Ovary (tissue), 10 donors: ENCODE measurements at regions of chr6 and their contacts with region 1.

Region 1: DNA sequence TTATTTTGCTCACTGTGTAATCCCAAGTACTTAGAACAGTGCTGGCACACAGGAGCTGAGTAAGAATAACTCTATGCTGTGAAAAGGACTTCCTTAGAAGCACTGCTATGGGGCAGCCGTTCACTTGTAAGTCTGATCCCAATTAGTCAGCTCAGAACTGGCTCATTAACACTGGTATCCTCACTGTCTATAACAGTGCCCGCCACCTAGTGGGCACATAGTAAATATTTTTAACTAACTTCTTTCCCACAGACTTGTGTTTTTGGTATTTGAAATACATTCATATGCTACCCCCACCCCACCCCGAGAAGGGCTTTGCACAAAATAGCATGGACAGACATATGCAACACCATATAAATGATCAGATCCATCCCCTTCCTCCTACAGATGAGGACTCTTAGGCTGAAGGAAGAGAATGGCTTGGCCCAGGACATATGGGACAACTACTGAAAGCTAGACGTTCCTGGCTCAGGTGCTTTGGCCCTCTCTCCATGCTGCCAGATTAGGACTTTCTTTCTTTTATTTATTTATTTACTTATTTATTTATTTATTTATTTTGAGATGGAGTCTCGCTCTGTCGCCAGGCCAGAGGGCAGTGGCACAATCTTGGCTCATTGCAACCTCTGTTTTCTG is 47.1 kb downstream of the DST start:
- DNase-seq: peak; percentile 12 to 49 (median 40)
- H3K4me3 ChIP-seq: no peak overlapping the region
- H3K27ac ChIP-seq: no peak overlapping the region
- H3K4me1 ChIP-seq: no peaks in the 10 kb centered on the region
- H3K27me3 ChIP-seq: peaks cover 2% of the 10 kb centered on the region
- CTCF ChIP-seq: peak; percentile 31 to 58 (median 48)
- EP300 ChIP-seq: no peak
- POLR2A ChIP-seq: no peak

Region 2: GRCh38 chr6:56172144-56172543 is 423.5 kb before region 1 on chr6:
- intact Hi-C with region 1: no loop called
- DNase-seq: no peak
- H3K4me3 ChIP-seq: no peak overlapping the region
- H3K27ac ChIP-seq: no peak overlapping the region
- H3K4me1 ChIP-seq: no peaks in the 10 kb centered on the region
- H3K27me3 ChIP-seq: no peaks in the 10 kb centered on the region
- CTCF ChIP-seq: no peak
- EP300 ChIP-seq: no peak
- POLR2A ChIP-seq: no peak

Region 3: GRCh38 chr6:56356426-56356825 is 239.2 kb before region 1 on chr6:
- intact Hi-C with region 1: loop called in 2 of 4 experiments (anchors 2 to 10 kb)
- DNase-seq: no peak
- H3K4me3 ChIP-seq: no peak overlapping the region
- H3K27ac ChIP-seq: no peak overlapping the region
- H3K4me1 ChIP-seq: no peaks in the 10 kb centered on the region
- H3K27me3 ChIP-seq: no peaks in the 10 kb centered on the region
- CTCF ChIP-seq: no peak
- EP300 ChIP-seq: no peak
- POLR2A ChIP-seq: no peak

Region 4: GRCh38 chr6:56364827-56365313 is 230.7 kb before region 1 on chr6:
- intact Hi-C with region 1: loop called in 2 of 4 experiments (anchors 2 to 10 kb)
- DNase-seq: no peak
- H3K4me3 ChIP-seq: no peak overlapping the region
- H3K27ac ChIP-seq: no peak overlapping the region
- H3K4me1 ChIP-seq: no peaks in the 10 kb centered on the region
- H3K27me3 ChIP-seq: no peaks in the 10 kb centered on the region
- CTCF ChIP-seq: no peak
- EP300 ChIP-seq: no peak
- POLR2A ChIP-seq: no peak

Region 5: DNA sequence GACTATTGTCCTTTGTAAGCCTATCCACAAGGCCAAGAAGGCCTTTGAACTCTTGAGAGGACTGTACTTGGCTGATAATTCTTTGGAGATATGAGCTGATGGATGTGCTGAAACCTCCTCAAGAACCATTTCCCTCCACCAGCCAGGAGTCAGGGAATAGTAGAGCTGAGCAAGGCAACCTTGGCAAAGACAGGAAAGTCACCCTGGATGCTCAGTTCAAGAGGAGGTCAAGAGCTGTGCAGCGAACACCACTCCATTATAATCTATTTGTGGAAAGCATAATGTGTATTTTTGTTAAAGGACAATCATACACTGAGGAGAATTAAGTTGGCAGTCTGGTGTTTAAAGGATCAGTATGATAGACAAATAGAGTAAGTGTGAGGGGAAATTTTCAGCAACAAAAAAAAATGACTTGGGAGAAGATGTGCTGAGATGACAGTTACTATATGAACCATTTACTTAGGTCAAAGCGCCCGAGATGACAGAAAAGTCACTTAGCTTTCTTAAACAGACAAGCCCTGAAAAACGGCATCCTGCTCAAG is 171.0 kb before region 1 on chr6:
- intact Hi-C with region 1: no loop called
- DNase-seq: no peak
- H3K4me3 ChIP-seq: no peak overlapping the region
- H3K27ac ChIP-seq: no peak overlapping the region
- H3K4me1 ChIP-seq: peaks cover 5% of the 10 kb centered on the region
- H3K27me3 ChIP-seq: no peaks in the 10 kb centered on the region
- CTCF ChIP-seq: no peak
- EP300 ChIP-seq: no peak
- POLR2A ChIP-seq: no peak